Posterior cingulate gyrus (tissue), 11 donors: ENCODE measurements at regions of chr19 and their contacts with region 1.

Region 1: GRCh38 chr19:10580979-10581631 is 6.0 kb downstream of the AP1M2 start:
- DNase-seq: peak; percentile 79 to 98 (median 90)

Region 2: GRCh38 chr19:10602330-10603083 is 21.4 kb after region 1 on chr19:
- intact Hi-C with region 1: no loop called
- DNase-seq: peak; percentile 63 to 96 (median 83)

Region 3: DNA sequence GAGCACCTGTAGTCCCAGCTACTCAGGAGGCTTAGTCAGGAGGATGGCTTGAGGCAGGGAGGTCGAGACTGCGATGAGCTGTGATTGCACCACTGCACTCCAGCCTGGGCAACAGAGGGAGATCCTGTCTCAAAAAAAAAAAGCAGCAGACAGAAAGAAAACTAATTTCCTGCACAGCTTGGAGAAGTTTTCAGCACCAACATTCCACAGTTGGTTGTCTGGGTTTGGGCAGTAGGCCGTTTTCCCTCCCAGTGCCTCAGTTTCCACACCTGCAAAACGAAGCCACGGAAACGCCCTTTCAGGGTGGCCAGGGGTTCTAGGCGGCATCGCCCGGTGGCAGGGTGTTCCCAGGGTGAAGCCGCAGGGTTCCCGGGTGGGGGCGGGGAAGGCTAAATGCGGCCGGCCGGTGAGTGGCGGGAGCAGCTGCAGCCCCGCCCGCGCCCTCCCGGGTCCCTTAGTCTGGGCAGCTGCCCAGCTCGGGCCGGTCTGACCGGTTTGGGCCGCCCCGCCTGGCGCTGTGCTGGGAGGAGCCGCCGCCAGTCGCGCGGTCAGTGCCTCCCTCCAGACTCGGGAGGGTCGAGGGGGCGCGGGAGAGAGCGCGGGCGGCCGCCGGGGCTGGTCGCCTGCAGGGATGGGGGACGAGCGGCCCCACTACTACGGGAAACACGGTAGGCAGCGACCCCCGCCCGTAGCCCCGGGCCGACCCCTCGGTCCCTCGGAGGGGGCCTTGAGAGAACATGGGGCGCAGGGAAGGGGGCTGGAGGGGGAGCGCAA is 44.1 kb after region 1 on chr19 and contains the start of gene SLC44A2:
- intact Hi-C with region 1: no loop called
- DNase-seq: peak; percentile 68 to 96 (median 76)

Region 4: DNA sequence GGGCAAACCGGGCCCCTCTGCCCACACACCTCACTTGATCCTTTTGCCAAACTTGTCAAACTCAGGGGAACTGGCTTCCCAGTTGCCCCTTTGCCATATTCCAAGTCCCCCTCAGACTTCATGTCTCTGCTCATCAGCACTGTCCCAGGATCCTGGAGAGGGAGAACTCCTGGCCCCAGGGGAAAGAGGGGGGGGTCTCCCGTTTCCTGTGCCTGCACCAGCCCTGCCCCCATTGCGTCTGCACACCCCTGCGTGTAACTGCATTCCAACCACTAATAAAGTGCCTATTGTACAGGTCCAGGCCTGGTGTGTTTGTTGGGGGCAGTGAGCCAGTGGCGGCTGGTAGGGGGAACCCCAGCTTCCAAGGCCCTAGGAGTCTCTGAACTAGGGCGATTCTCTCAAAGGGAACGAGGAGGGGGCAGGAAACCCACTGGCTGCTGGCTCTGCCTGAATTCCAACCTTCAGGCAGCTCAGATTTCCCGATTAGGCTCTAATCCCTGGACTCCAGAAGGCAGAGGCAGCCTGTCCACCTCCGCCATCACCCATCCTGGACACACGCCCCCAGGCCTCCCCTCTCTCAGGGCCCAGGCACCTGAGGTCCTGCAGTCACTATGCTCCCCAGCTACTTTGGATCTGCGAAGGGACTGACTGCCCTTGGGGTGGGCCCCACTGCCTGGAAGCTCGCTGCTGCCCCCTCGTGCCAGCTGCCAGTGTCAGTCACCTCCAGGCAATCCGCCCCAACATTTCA is 63.3 kb after region 1 on chr19:
- intact Hi-C with region 1: loop called (anchors 1 kb)
- DNase-seq: peak; percentile 70 to 98 (median 86)

Region 5: GRCh38 chr19:10695401-10696398 is 114.6 kb after region 1 on chr19:
- intact Hi-C with region 1: loop called (anchors 5 kb)
- DNase-seq: peak; percentile 71 to 99 (median 91)